Right cardiac atrium (tissue), 5 donors: ENCODE measurements at regions of chr10 and their contacts with region 1.

Region 1: DNA sequence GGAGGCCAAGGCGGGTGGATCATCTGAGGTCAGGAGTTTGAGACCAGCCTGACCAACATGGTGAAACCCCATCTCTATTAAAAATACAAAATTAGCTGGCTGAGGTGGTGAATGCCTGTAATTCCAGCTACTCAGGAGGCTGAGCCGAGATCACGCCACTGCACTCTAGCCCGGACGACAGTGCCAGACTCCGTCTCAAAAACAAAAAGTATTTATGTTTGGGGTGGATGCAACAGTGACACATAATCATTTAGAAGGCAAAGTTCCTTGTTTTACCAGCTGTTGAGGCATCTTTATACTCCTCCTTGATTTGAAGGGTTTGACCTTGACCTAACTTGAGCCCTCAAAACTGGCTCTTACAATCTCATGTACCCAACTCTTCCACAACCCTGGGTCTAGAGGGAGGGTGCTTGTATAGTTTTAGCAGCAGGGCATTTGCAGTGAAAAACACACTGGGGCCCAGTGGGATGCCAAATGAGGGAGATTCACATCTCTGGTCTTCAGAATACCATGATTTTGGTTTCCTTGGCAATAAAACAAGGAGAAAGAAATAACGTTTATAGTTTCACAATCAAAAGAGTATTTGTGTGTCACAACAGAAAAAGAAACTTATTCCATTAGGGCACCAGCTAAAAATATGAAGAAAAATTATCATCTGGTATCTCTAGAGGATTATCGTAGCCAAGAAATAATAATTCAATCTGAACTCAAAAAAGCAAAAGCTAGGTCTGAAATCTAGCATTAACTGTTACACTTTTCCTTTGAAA is 14.2 kb upstream of the TMEM254 start:
- DNase-seq: no peak
- ATAC-seq: peak in 1 of 2 donors; percentile 22
- H3K4me3 ChIP-seq: no peak overlapping the region
- H3K27ac ChIP-seq: no peak overlapping the region
- H3K4me1 ChIP-seq: no peaks in the 10 kb centered on the region
- H3K27me3 ChIP-seq: no peaks in the 10 kb centered on the region

Region 2: DNA sequence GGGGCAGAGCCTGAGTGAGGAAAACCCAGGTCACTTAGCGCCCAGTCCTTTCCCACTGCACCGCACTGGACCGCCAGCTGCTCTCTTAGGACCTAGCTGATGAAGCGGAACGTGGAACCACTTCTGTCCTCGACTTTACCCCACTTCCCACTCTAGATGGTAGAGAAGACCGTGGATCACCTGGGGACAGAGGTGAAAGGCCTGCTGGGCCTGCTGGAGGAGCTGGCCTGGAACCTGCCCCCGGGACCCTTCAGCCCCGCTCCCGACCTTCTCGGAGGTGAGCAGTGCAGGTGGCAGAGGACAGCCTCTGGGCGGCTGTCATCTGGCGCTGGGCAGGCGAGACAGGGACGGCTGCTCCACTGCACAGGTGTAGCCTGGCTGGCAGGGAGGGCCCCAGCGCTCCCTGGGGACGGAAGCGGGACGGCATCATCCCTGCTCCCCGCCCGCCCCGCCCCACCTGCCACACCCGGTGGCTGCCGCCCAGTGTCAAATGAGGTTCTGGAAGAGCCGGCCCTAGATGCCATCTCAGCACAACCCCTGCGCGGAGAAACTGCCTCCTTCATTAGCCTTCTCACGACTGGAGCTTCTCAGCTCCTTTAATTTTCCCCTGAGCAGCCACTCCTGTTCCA is 79.9 kb after region 1 on chr10:
- intact Hi-C with region 1: loop called in 1 of 4 experiments (anchors 5 kb)
- DNase-seq: peak in 2 of 3 donors; percentile 68 to 74
- ATAC-seq: peak; percentile 58 to 59
- H3K4me3 ChIP-seq: no peak overlapping the region
- H3K27ac ChIP-seq: no peak overlapping the region
- H3K4me1 ChIP-seq: no peaks in the 10 kb centered on the region
- H3K27me3 ChIP-seq: no peaks in the 10 kb centered on the region